Lower leg skin (tissue), 4 donors: ENCODE measurements at regions of chr9 and their contacts with region 1.

Region 1: GRCh38 chr9:118170032-118170955 is 466.1 kb downstream of the TLR4 start:
- DNase-seq: no peak
- H3K4me3 ChIP-seq: no peak overlapping the region
- CTCF ChIP-seq: no peak
- POLR2A ChIP-seq: no peak

Region 2: GRCh38 chr9:118222375-118222774 is 52.1 kb after region 1 on chr9:
- intact Hi-C with region 1: loop called (anchors 5 kb)
- DNase-seq: no peak
- H3K4me3 ChIP-seq: no peak overlapping the region
- CTCF ChIP-seq: no peak
- POLR2A ChIP-seq: no peak